ENCODE measurements at regions of chr15 and their contacts with region 1.

Region 1: DNA sequence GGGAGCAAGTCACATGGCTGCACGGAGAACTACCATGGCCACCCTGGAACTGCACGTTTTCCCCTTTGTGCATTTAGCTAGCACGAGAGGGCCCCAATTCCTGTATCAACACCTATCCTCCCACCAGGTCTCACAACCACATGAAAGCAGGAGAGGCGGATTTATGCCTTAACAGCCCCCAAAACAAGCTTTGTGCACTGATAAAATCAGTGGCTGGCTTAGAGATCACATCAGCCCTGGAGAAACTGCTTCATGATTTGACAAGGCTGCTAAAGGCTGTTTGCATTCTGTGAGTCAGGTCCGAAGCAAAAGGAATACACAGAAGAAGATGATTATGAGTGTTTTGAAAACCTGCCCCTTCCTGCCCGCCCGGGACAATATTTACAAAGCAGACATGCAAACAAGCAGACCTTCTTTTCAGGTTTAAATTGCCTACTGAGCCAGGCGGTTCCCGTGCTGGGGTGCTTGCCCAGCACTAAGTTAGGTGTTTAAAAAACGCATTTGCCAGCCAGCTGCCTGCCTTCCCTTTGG is 25.9 kb downstream of the CEMIP start:
- DNase-seq: peak; percentile 27
- H3K4me3 Mint-ChIP-seq: peak overlapping the region; percentile 19
- H3K27ac Mint-ChIP-seq: peak overlapping the region; percentile 62
- H3K4me1 Mint-ChIP-seq: peaks cover 49% of the 10 kb centered on the region
- H3K27me3 Mint-ChIP-seq: peaks cover 2% of the 10 kb centered on the region

Region 2: DNA sequence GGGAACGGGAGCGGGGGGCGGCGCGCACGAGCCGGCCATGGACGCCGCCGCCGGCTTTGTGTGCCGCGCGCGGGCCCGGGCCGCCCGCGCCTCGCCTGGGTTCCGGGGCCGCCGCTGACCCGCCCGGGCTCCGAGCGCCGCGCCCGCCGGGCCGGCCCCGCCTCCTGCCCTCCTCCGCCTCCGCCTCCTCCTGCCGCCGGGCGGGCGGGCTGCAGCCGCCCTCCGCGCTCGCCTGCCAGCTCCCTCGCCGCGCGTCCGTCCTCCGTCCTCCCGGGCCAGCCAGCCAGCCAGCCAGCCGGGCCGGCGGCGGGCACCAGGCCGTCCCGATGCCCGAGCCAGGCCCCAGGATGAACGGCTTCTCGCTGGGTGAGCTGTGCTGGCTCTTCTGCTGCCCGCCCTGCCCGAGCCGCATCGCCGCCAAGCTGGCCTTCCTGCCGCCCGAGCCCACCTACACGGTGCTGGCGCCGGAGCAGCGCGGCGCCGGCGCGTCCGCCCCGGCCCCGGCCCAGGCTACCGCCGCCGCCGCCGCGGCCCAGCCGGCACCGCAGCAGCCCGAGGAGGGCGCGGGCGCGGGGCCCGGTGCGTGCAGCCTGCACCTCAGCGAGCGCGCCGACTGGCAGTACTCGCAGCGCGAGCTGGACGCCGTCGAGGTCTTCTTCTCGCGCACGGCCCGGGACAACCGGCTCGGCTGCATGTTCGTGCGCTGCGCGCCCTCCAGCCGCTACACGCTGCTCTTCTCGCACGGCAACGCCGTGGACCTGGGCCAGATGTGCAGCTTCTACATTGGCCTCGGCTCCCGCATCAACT is 109.7 kb before region 1 on chr15 and contains the start of gene ABHD17C:
- intact Hi-C with region 1: loop called (anchors 10 kb)
- DNase-seq: peak; percentile 32
- H3K4me3 Mint-ChIP-seq: peak within 1 kb of the TSS; percentile 86
- H3K27ac Mint-ChIP-seq: peak within 1 kb of the TSS; percentile 43
- H3K4me1 Mint-ChIP-seq: peaks cover 16% of the 10 kb centered on the region
- H3K27me3 Mint-ChIP-seq: peaks cover 51% of the 10 kb centered on the region
- total RNA-seq, gene ABHD17C: 4.2 and 4.3 TPM in 2 replicates

Region 3: DNA sequence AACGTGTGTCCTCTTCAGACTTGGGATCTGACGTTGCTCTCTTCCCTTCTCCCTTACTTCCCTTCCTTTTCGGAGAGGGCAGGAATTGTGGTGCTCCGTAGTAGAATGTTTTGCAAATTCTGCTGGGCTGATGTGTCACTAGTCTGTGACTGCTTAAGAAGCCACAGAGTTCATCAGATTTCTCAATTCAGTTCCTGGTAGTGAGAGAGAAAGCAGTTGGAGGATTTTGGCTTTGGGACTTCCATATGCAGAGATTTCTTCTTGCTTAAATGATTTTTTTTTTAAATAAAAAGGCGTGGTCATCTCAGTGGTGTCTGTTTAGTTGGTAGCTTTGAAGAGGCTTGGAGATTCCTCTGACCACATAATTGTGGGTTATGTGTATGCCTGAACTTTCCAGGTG is 15.7 kb before region 1 on chr15:
- intact Hi-C with region 1: loop called (anchors 1 kb)
- DNase-seq: no peak
- H3K4me3 Mint-ChIP-seq: no peak overlapping the region
- H3K27ac Mint-ChIP-seq: no peak overlapping the region
- H3K4me1 Mint-ChIP-seq: peaks cover 45% of the 10 kb centered on the region
- H3K27me3 Mint-ChIP-seq: peaks cover 14% of the 10 kb centered on the region

Region 4: GRCh38 chr15:80957556-80957955 is 152.5 kb after region 1 on chr15:
- intact Hi-C with region 1: loop called (anchors 5 kb)
- DNase-seq: no peak
- H3K4me3 Mint-ChIP-seq: no peak overlapping the region
- H3K27ac Mint-ChIP-seq: no peak overlapping the region
- H3K4me1 Mint-ChIP-seq: peaks cover 22% of the 10 kb centered on the region
- H3K27me3 Mint-ChIP-seq: no peaks in the 10 kb centered on the region